HEK293T (cell line): ENCODE measurements at regions of chr16 and their contacts with region 1.

Region 1: GRCh38 chr16:2142942-2143877 is 5.2 kb upstream of the RAB26 start:
- DNase-seq: no peak

Region 2: DNA sequence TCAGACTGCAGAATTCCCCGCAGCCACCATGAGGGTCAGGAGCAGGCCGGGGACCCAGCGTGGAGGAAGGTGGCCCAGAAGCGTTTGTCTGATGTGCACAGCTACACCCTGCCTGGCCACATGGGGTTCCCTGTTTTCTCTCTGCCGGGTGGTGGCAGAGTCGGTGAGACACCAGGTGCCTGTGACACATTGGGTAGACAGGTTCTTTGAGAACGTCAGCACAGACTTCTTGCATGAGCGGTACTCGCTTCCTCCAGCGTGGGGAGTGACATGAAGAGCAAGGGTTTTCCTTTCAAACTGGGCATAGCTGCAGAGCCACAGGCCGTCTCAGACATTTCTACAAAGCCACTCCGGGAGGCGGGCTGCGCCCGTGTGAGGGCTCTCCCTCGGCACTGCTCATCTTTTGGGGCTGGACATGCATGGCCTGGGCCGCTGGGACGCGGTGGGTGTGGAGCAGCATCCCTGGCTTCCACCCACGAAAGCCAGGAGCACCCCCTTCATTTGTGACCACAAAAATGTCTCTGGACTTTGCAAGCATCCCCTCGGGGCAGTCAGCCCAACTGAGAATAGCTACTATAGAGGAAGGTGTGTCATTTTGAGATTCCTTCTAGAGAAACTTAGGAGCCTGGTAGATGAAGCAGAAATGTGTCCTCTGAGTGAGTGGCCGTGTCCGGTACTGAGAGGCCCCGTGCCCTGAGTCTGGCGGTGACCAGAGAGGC is 397.9 kb before region 1 on chr16:
- CTCF ChIA-PET with region 1: no interaction called
- POLR2A ChIA-PET with region 1: no interaction called
- DNase-seq: no peak

Region 3: GRCh38 chr16:1800701-1801100 is 342.5 kb before region 1 on chr16:
- CTCF ChIA-PET with region 1: no interaction called
- POLR2A ChIA-PET with region 1: no interaction called
- DNase-seq: no peak

Region 4: DNA sequence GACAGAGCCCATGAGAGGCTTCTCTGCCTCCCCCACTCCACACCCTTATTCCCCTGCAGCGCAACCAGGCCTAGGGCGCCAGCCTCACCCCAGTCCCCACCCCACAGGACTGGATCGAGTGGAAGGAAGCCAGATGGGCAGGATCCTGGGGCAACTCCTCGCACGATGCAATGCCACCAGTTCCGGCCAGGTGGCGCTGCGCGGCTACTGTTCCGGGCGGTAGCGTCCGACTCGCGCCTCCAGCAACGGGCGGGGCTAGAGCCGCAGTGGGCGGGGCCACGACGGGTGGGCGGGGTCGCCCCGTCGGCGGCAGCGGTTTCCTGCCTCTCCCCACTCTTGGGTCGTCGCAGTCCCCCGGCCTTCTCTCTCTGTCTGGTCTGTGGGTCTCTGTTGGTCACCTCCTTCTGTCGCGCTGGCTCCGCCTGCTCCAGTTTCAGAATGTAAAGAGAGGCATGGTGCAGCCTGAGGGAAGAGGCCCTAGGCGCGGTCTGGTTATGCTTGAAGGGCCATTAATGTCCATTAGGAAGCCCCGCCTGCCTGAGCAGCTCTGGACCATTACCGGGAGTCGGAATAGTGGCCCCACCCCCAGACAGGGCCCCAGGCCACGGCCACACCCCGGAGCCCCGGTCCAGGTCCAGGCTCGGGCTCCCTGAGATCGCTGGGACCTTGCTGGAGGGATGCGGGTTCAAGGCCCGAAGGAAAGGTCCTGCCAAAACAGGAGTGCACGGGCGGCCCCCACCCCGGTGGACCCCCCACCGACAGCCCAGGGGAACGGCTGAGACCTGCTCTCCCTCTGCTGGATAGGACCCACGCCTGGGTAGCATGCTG is 119.9 kb before region 1 on chr16:
- CTCF ChIA-PET with region 1: interaction called, 13 read pairs
- POLR2A ChIA-PET with region 1: no interaction called
- DNase-seq: peak; percentile 99

Region 5: GRCh38 chr16:2121853-2122252 is 21.4 kb before region 1 on chr16:
- CTCF ChIA-PET with region 1: interaction called, 17 read pairs
- POLR2A ChIA-PET with region 1: interaction called, 3 read pairs
- DNase-seq: no peak